ENCODE measurements at regions of chr6 and their contacts with region 1.

Region 1: DNA sequence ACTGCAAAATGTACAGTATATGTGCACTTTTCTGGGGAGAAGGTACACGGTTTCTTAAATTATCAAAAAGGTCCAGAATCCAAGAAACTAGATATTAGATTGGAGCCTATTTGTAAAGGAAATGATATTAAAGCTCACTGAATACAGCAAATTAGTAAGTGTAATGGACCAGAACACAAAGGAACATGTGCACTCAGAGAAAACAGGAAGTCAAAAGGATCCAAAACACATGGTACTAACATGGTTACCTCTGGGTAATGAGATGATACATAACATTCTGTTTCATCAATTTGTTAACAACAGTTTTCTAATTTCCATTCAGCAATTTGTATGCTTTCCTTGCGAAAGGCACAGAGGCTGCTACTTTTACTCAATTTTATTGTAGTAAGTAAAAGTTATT is 18.7 kb downstream of the ZNF322 start:
- DNase-seq: no peak
- ATAC-seq: no peak
- H3K4me3 ChIP-seq: no peak overlapping the region
- H3K27ac ChIP-seq: no peak overlapping the region
- H3K4me1 ChIP-seq: no peaks in the 10 kb centered on the region
- H3K27me3 ChIP-seq: no peaks in the 10 kb centered on the region
- CTCF ChIP-seq: no peak

Region 2: GRCh38 chr6:26118999-26119398 is 521.8 kb before region 1 on chr6:
- intact Hi-C with region 1: no loop called
- DNase-seq: no peak
- ATAC-seq: no peak
- H3K4me3 ChIP-seq: no peak overlapping the region
- H3K27ac ChIP-seq: no peak overlapping the region
- H3K4me1 ChIP-seq: peaks cover 0 to 9% (median 6%) of the 10 kb centered on the region in 9 donors
- H3K27me3 ChIP-seq: no peaks in the 10 kb centered on the region
- CTCF ChIP-seq: no peak

Region 3: GRCh38 chr6:27592481-27593199 is 951.8 kb after region 1 on chr6:
- intact Hi-C with region 1: loop called in 1 of 10 experiments (anchors 5 kb)
- DNase-seq: no peak
- ATAC-seq: no peak
- H3K4me3 ChIP-seq: peak overlapping the region in 1 of 10 donors; percentile 16
- H3K27ac ChIP-seq: no peak overlapping the region
- H3K4me1 ChIP-seq: peaks cover 0 to 10% (median 0%) of the 10 kb centered on the region in 9 donors
- H3K27me3 ChIP-seq: peaks cover 10 to 99% (median 86%) of the 10 kb centered on the region in 7 donors
- CTCF ChIP-seq: no peak